CD8-positive, alpha-beta T cell (primary cell): ENCODE measurements at regions of chr10 and their contacts with region 1.

Region 1: GRCh38 chr10:97318772-97319651 is at the start of gene FRAT1:
- DNase-seq: peak; percentile 86 to 97 (median 92)
- ATAC-seq: peak; percentile 76
- H3K4me3 ChIP-seq: peak within 1 kb of the TSS; percentile 76 to 79
- H3K4me3 Mint-ChIP-seq: peak within 1 kb of the TSS; percentile 99
- H3K27ac ChIP-seq: peak within 1 kb of the TSS; percentile 100
- H3K27ac Mint-ChIP-seq: peak within 1 kb of the TSS; percentile 100
- H3K4me1 ChIP-seq: peaks cover 24% of the 10 kb centered on the region
- H3K4me1 Mint-ChIP-seq: peaks cover 29% of the 10 kb centered on the region
- H3K27me3 ChIP-seq: no peaks in the 10 kb centered on the region
- H3K27me3 Mint-ChIP-seq: no peaks in the 10 kb centered on the region
- CTCF ChIP-seq: no peak
- total RNA-seq, gene FRAT1: 39.6 to 40.2 TPM

Region 2: DNA sequence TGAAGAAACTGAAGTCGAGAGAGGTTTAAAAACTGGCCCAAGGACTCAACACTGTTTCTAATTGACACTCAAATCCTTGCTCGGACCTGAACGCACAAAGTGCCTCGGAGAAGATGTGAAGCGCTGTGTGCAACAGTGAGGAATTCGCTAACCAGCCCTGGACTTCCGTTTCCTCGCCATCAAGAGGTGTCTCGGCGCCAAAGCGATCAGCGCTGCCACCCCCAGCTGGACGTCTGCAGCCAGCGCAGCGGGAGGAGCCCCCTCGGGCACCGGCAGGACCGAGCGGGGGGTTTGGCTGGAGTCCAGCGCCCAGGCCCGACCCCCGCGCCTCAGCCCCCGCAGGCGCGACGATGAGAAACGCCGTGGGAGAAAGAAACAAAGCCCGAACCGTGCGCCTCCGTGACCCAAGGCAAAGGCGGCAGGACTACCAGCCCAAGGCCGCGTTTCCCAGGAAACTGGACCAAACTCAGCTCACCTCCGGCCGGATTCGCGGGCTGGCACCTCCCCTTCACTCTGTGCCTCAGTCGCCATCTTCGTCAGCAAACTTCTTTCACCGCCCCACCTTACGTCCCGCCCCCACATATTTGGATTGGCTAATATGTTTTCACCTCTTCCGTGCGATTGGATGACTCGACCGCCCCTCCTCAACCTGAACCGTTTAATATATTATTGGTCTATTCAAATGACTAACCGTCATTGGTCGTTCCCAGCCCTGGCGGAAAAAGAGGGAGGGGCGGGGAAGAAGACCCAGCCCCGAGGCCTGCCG is 26.7 kb before region 1 on chr10 and contains the start of gene ARHGAP19:
- CTCF ChIA-PET with region 1: interaction called, 6 read pairs
- POLR2A ChIA-PET with region 1: interaction called, 16 read pairs
- intact Hi-C with region 1: loop called (anchors 1 kb)
- DNase-seq: peak; percentile 86 to 98 (median 91)
- ATAC-seq: peak; percentile 99
- H3K4me3 ChIP-seq: peak within 1 kb of the TSS; percentile 82 to 93
- H3K4me3 Mint-ChIP-seq: peak within 1 kb of the TSS; percentile 94
- H3K27ac ChIP-seq: peak within 1 kb of the TSS; percentile 73 to 75
- H3K27ac Mint-ChIP-seq: peak within 1 kb of the TSS; percentile 86
- H3K4me1 ChIP-seq: peaks cover 6% of the 10 kb centered on the region
- H3K4me1 Mint-ChIP-seq: peaks cover 20% of the 10 kb centered on the region
- H3K27me3 ChIP-seq: no peaks in the 10 kb centered on the region
- H3K27me3 Mint-ChIP-seq: no peaks in the 10 kb centered on the region
- CTCF ChIP-seq: no peak
- total RNA-seq, gene ARHGAP19: 5.7 to 6.4 TPM

Region 3: GRCh38 chr10:97307866-97308780 is 10.9 kb before region 1 on chr10:
- CTCF ChIA-PET with region 1: interaction called, 3 read pairs
- POLR2A ChIA-PET with region 1: interaction called, 12 read pairs
- intact Hi-C with region 1: no loop called
- DNase-seq: no peak
- ATAC-seq: no peak
- H3K4me3 ChIP-seq: no peak overlapping the region
- H3K4me3 Mint-ChIP-seq: no peak overlapping the region
- H3K27ac ChIP-seq: no peak overlapping the region
- H3K27ac Mint-ChIP-seq: no peak overlapping the region
- H3K4me1 ChIP-seq: no peaks in the 10 kb centered on the region
- H3K4me1 Mint-ChIP-seq: no peaks in the 10 kb centered on the region
- H3K27me3 ChIP-seq: no peaks in the 10 kb centered on the region
- H3K27me3 Mint-ChIP-seq: no peaks in the 10 kb centered on the region
- CTCF ChIP-seq: no peak